Activated CD4-positive, alpha-beta memory T cell treated with anti-CD3 and anti-CD28 coated beads for 36 hours (primary cell): ENCODE measurements at regions of chr1 and their contacts with region 1.

Region 1: GRCh38 chr1:172588296-172589291 is 55.6 kb downstream of the SUCO start:
- DNase-seq: peak; percentile 43
- H3K4me3 Mint-ChIP-seq: no peak overlapping the region
- H3K27ac Mint-ChIP-seq: peak overlapping the region; percentile 49
- H3K4me1 Mint-ChIP-seq: peaks cover 28% of the 10 kb centered on the region
- H3K27me3 Mint-ChIP-seq: no peaks in the 10 kb centered on the region

Region 2: DNA sequence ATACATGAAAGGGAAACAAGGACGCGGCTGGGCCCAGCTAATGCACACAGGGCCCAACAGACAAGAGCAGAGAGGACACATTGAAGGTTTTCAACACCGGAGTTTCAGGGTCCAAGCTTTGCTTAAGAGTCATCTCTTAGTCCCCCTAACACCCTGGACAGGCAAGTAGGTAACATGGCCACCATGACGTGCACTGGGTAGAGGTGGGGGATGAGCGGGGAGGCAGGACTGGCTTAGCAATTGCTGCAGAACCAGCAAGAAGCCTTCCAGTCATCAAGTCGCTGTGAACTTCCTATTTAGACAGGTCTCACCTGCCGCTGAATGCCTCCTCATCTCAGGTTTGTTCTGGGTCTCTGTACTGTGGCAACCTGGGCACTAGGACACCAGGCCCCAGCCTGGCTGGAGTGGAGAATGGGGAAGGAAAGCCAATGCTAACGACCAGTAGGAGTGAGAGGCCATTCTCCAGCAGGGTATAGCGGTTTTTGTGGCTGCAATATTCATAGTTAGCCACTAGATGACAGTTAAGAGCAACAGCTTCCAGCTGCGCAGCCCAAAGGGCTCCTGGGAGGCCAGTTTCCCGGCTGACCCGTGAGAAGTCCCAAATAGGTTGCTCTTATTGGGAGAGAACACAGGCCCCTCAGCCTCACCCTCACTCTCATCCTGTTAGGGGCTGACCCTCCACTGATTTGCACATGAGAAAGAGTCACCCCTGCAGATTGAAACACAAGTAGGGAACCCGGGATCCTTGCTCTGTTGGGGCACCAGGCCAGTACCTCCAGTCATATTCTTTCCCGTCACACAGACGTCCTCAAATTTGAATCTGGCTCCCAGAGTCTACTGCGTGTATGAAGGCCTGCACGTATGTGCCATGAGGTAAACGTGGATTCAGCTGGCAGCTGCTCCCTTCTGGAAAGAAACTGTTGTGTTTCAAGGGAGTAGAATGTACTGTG is 138.7 kb before region 1 on chr1:
- CTCF ChIA-PET with region 1: no interaction called
- POLR2A ChIA-PET with region 1: no interaction called
- intact Hi-C with region 1: loop called (anchors 5 kb)
- DNase-seq: peak; percentile 47
- H3K4me3 Mint-ChIP-seq: peak overlapping the region; percentile 36
- H3K27ac Mint-ChIP-seq: no peak overlapping the region
- H3K4me1 Mint-ChIP-seq: peaks cover 31% of the 10 kb centered on the region
- H3K27me3 Mint-ChIP-seq: no peaks in the 10 kb centered on the region

Region 3: DNA sequence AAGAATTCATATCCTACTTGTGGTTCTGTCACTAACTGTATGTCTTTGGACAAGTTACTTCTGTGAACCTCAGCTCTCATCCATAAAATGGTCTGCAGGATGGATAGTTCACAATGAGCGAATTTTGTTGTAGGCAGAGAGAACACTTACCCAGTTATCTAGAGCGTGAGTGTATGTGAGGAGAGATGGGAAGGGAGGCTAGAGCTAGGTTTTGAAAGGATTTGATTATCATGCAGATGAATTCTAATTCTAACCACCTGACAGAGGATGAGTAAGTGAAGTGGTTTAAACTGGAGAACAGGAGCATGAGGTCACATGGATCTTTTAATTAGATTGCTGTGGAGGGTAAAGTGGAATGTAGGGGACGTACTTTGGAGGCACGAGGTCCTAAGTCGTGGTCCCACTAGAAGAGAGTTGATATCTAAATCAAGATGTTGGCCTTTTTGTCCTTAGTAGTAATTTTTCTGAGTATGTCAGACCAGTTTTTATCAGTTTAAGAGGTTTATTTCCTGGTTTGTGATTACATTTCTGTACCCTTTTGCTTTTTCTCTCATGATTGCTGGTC is 50.7 kb before region 1 on chr1:
- CTCF ChIA-PET with region 1: no interaction called
- POLR2A ChIA-PET with region 1: no interaction called
- intact Hi-C with region 1: loop called (anchors 5 kb)
- DNase-seq: no peak
- H3K4me3 Mint-ChIP-seq: no peak overlapping the region
- H3K27ac Mint-ChIP-seq: no peak overlapping the region
- H3K4me1 Mint-ChIP-seq: peaks cover 69% of the 10 kb centered on the region
- H3K27me3 Mint-ChIP-seq: no peaks in the 10 kb centered on the region

Region 4: DNA sequence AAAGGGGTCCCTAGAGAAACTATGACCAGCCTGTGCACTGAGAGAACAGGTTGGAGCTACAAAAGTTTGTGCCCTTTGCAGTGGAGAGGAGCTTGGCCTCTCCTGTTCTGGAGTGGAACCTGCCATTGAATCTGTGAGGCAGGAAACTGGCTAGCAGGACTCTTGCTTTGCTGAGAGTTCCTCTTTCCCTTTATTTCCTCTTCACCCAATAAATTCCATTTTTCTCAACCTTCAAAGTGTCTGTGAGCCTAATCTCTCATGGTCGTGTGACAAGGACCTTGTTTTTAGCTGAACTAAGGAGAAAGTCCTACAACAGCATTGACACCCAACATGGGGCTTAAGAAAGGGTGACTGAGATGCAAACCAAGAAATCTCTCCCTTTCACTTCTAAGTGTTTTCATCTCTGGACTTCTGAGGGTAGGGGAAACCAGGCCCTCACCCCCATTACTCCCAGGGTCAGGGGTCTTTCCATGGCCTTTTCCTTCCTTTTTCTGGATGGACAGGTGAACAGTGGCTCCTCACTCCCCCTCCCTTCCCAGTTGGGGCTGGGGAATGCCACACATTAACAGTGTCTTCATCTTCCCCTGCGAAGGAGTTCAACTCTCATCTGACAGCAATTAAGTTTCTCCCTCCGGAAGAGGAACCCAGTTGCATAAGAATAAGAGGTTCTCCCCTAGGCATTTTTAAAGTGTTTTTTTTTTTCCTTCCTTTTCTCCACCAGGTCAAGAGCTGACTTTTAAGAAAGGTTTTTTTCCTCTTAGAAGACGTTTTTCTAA is 27.8 kb after region 1 on chr1:
- CTCF ChIA-PET with region 1: no interaction called
- POLR2A ChIA-PET with region 1: no interaction called
- intact Hi-C with region 1: no loop called
- DNase-seq: no peak
- H3K4me3 Mint-ChIP-seq: no peak overlapping the region
- H3K27ac Mint-ChIP-seq: no peak overlapping the region
- H3K4me1 Mint-ChIP-seq: no peaks in the 10 kb centered on the region
- H3K27me3 Mint-ChIP-seq: no peaks in the 10 kb centered on the region

Region 5: GRCh38 chr1:172671591-172671990 is 83.0 kb after region 1 on chr1:
- CTCF ChIA-PET with region 1: interaction called, 10 read pairs
- POLR2A ChIA-PET with region 1: interaction called, 3 read pairs
- intact Hi-C with region 1: no loop called
- DNase-seq: no peak
- H3K4me3 Mint-ChIP-seq: no peak overlapping the region
- H3K27ac Mint-ChIP-seq: no peak overlapping the region
- H3K4me1 Mint-ChIP-seq: peaks cover 77% of the 10 kb centered on the region
- H3K27me3 Mint-ChIP-seq: no peaks in the 10 kb centered on the region